ENCODE measurements at regions of chr14 and their contacts with region 1.

Region 1: GRCh38 chr14:90773705-90774104 is 42.5 kb downstream of the TTC7B start:
- DNase-seq: no peak

Region 2: GRCh38 chr14:90758028-90758889 is 15.4 kb before region 1 on chr14:
- CTCF ChIA-PET with region 1: interaction called, 42 read pairs
- POLR2A ChIA-PET with region 1: interaction called, 3 read pairs
- DNase-seq: peak; percentile 99

Measured in HEK293T (cell line).